Endothelial cell of umbilical vein (primary cell): ENCODE measurements at regions of chr7 and their contacts with region 1.

Region 1: DNA sequence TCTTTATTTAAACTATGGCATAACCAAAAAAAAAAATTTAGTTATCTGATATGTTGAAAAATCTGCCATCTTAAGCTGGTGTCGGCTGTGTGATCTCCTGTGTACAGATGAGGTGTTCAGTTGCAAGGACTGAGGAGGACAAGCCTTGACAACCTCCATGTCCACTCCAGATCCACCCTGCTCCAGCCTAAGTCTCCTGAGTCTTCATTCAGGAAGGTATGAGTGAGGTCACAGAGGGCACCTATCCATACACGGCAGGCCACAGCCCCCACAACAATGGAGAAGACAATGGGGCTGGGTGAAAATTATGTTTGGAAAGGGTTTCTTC is 16.1 kb downstream of the TARP start:
- DNase-seq: no peak
- H3K4me3 ChIP-seq: no peak overlapping the region
- H3K27ac ChIP-seq: no peak overlapping the region
- H3K4me1 ChIP-seq: no peaks in the 10 kb centered on the region
- H3K27me3 ChIP-seq: no peaks in the 10 kb centered on the region
- CTCF ChIP-seq: no peak
- POLR2A ChIP-seq: no peak

Region 2: DNA sequence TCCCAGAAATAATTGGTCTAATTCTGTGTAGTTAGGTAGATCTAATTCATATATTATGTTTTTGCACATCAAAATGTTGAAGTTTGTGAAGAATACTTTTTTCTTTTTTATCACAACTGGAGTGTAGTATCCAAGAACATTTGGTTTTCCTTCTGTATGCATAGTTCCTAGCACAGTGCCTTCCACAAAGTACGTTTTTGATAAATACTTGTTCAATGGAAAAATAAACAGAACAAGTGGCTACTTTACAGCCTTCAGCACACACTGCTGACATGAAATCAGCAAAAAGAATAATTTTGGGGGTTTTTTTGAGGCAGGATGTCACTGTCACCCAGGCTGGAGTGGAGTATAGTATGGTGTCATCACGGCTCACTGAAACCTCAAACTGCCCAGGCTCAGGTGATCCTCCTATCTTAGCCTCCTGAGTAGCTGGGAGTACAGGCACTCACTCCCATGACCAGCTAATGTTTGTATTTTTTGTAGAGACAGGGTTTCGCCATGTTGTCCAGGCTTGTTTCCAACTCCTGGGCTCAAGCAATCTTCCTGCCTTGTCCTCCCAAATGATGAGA is 11.8 kb before region 1 on chr7:
- CTCF ChIA-PET with region 1: no interaction called
- POLR2A ChIA-PET with region 1: no interaction called
- dilution Hi-C with region 1: no loop called
- intact Hi-C with region 1: no loop called
- DNase-seq: no peak
- H3K4me3 ChIP-seq: no peak overlapping the region
- H3K27ac ChIP-seq: no peak overlapping the region
- H3K4me1 ChIP-seq: no peaks in the 10 kb centered on the region
- H3K27me3 ChIP-seq: peaks cover 3 to 4% of the 10 kb centered on the region in 2 experiments
- CTCF ChIP-seq: no peak
- POLR2A ChIP-seq: no peak

Region 3: GRCh38 chr7:38274486-38274885 is 17.2 kb after region 1 on chr7:
- CTCF ChIA-PET with region 1: no interaction called
- POLR2A ChIA-PET with region 1: no interaction called
- dilution Hi-C with region 1: no loop called
- intact Hi-C with region 1: loop called (anchors 1 kb)
- DNase-seq: no peak
- H3K4me3 ChIP-seq: no peak overlapping the region
- H3K27ac ChIP-seq: no peak overlapping the region
- H3K4me1 ChIP-seq: no peaks in the 10 kb centered on the region
- H3K27me3 ChIP-seq: peaks cover 0 to 3% of the 10 kb centered on the region in 2 experiments
- CTCF ChIP-seq: no peak
- POLR2A ChIP-seq: no peak